Panc1 (cell line): ENCODE measurements at regions of chr6 and their contacts with region 1.

Region 1: DNA sequence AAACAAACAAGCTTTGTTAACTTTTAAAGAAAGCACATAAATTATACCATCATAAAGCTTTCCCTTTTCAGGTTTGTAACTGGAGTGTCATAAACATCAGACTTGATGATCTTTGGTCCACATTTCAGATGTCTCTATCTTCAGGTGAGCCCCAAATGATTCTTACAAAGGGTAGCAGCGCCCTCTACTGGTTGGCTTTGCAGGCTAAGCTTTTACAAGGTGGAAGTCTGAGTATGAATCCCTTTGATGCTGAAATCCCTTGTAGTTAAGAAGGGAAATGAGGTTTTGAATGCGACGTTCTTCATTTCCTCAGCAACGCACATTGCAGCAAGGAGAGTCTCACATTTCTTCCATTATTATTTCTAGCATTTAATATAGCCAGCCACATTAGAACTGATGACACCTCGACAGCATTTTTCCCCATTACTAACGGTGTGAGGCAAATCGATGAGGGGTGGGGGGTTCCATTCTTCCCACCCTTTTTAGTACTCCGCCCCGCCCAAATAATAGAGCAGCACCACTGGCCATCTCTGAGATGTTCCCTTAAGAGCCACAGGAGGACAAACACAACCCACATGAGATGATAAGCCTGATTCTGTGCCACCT is 126.3 kb upstream of the NT5E start:
- DNase-seq: peak; percentile 42
- ATAC-seq: peak; percentile 94
- H3K4me3 ChIP-seq: no peak overlapping the region
- H3K27ac ChIP-seq: no peak overlapping the region
- H3K4me1 ChIP-seq: no peaks in the 10 kb centered on the region
- H3K27me3 ChIP-seq: no peaks in the 10 kb centered on the region
- CTCF ChIP-seq: peak; percentile 88

Region 2: DNA sequence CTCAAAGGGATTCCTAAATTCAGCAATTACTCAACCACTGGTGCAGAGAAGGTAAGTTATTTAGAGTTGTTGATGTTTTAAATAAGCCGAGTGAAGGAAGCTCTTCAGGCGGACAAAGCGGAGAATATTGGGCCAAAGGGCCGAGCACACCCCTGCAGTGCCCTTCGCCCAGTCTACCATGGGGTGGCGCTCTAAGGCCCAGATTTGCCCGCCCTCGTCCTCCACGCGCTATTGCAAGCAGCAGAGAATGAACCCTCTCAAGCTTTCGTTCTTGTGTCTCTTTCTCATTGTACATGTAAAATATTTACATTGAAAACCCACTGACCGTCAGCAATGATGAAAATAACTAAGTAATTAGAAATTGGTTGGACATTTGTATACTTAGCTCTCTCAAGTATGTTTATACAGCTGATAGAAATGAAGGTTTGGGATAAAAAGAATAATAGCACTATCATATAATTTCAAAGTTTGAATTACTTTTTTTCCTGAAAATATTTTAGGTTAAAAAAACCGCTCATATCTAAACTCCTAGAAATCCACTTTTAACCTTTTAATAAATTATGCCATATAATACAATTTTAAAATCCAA is 901.1 kb before region 1 on chr6:
- CTCF ChIA-PET with region 1: no interaction called
- POLR2A ChIA-PET with region 1: no interaction called
- in situ Hi-C with region 1: no loop called
- intact Hi-C with region 1: loop called (anchors 5 kb)
- DNase-seq: peak; percentile 17
- ATAC-seq: peak; percentile 94
- H3K4me3 ChIP-seq: no peak overlapping the region
- H3K27ac ChIP-seq: no peak overlapping the region
- H3K4me1 ChIP-seq: no peaks in the 10 kb centered on the region; the same call in 1 of the 2 replicates
- H3K27me3 ChIP-seq: no peaks in the 10 kb centered on the region
- CTCF ChIP-seq: peak; percentile 87

Region 3: DNA sequence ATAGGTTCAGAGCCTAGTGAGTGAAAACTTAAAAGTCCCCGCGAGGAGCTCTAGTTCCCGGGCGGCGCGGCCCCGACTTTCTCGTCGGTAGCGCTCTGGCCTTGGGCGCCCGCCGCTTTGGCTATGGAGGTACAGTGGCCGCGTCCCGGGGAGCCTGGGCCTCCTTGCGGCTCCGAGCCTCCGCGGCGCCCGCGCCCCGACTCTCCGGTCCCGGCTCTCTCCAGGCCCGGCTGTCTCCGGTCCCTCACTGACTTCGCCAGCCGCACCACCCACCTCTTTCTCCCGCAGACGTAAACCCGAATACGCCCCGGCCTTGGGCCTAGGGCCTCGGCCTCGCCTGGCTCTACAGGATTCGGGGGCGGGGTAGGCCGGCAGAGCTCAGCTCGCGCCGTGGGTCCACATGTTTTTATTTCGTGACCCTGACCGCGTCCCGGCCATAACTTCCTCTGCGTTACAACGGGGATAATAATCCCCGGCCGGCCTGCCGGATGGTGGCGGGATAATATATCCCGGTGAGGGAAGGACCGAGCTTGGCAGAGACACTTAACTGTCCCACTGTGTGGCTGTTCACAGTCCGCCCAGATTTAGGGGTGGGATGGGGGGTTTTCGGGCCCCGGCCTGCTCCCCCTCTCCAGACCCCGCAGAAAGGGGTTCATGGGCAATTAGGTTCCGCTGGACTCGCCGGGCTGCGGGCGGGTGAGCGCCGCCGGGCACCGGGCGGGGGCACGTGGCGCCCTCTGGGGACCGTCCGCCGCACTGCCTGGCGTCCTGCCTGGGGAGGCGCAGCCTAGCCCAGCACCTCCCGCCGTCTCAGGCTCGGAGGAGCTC is 549.2 kb before region 1 on chr6:
- CTCF ChIA-PET with region 1: no interaction called
- POLR2A ChIA-PET with region 1: no interaction called
- in situ Hi-C with region 1: no loop called
- intact Hi-C with region 1: loop called (anchors 10 kb)
- DNase-seq: no peak
- ATAC-seq: peak; percentile 94
- H3K4me3 ChIP-seq: peak overlapping the region; percentile 41 to 60
- H3K27ac ChIP-seq: no peak overlapping the region
- H3K4me1 ChIP-seq: no peaks in the 10 kb centered on the region; the same call in 1 of the 2 replicates
- H3K27me3 ChIP-seq: peaks cover 41% of the 10 kb centered on the region
- CTCF ChIP-seq: peak; percentile 91

Region 4: GRCh38 chr6:85015396-85015990 is 308.0 kb before region 1 on chr6:
- CTCF ChIA-PET with region 1: no interaction called
- POLR2A ChIA-PET with region 1: no interaction called
- in situ Hi-C with region 1: no loop called
- intact Hi-C with region 1: loop called (anchors 5 kb)
- DNase-seq: peak; percentile 4
- ATAC-seq: peak; percentile 88
- H3K4me3 ChIP-seq: no peak overlapping the region
- H3K27ac ChIP-seq: no peak overlapping the region
- H3K4me1 ChIP-seq: no peaks in the 10 kb centered on the region
- H3K27me3 ChIP-seq: no peaks in the 10 kb centered on the region; the same call in 1 of the 2 replicates
- CTCF ChIP-seq: peak; percentile 79

Region 5: GRCh38 chr6:85126485-85127167 is 196.9 kb before region 1 on chr6:
- CTCF ChIA-PET with region 1: no interaction called
- POLR2A ChIA-PET with region 1: no interaction called
- in situ Hi-C with region 1: no loop called
- intact Hi-C with region 1: loop called (anchors 5 kb)
- DNase-seq: no peak
- ATAC-seq: peak; percentile 92
- H3K4me3 ChIP-seq: peak overlapping the region in 1 of 2 experiments; percentile 19; a peak in 1 of 4 replicates
- H3K27ac ChIP-seq: no peak overlapping the region
- H3K4me1 ChIP-seq: no peaks in the 10 kb centered on the region
- H3K27me3 ChIP-seq: no peaks in the 10 kb centered on the region; the same call in 1 of the 2 replicates
- CTCF ChIP-seq: peak; percentile 86

Region 6: GRCh38 chr6:85612690-85613474 is 289.3 kb after region 1 on chr6:
- CTCF ChIA-PET with region 1: no interaction called
- POLR2A ChIA-PET with region 1: no interaction called
- in situ Hi-C with region 1: no loop called
- intact Hi-C with region 1: no loop called
- DNase-seq: no peak
- ATAC-seq: no peak
- H3K4me3 ChIP-seq: no peak overlapping the region
- H3K27ac ChIP-seq: no peak overlapping the region
- H3K4me1 ChIP-seq: no peaks in the 10 kb centered on the region
- H3K27me3 ChIP-seq: no peaks in the 10 kb centered on the region
- CTCF ChIP-seq: no peak